Activated CD4-positive, alpha-beta T cell treated with anti-CD3 and anti-CD28 coated beads, Interleukin-2, amount 10 ng/mL, durations not matched to agents 24 days and 14 days (primary cell): ENCODE measurements at regions of chr4 and their contacts with region 1.

Region 1: DNA sequence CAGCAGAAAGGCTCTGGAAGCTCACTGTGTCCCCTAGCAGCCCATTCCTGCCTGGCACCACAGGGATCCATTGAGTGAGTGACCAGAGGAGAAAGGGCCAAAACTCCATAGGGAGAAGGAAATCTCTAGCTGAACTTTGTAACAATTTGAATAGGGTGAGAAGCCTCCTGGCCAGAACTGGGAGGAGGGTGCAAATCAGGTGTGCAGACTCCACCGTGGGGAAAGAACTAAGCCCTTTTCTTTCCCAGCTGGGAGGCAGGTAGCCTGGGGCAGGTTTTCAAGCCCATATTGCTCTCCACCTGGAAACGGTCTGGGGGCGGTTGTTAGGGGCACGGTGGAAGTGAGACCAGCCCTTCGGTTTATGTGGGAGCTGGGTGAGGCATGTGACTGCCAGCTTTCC is 227.2 kb downstream of the SNCA start:
- DNase-seq: no peak
- H3K4me3 Mint-ChIP-seq: no peak overlapping the region
- H3K27ac Mint-ChIP-seq: no peak overlapping the region
- H3K4me1 Mint-ChIP-seq: peaks cover 16% of the 10 kb centered on the region
- H3K27me3 Mint-ChIP-seq: no peaks in the 10 kb centered on the region

Region 2: GRCh38 chr4:88775529-88775928 is 834.2 kb before region 1 on chr4:
- intact Hi-C with region 1: no loop called
- DNase-seq: no peak
- H3K4me3 Mint-ChIP-seq: no peak overlapping the region
- H3K27ac Mint-ChIP-seq: no peak overlapping the region
- H3K4me1 Mint-ChIP-seq: no peaks in the 10 kb centered on the region
- H3K27me3 Mint-ChIP-seq: no peaks in the 10 kb centered on the region

Region 3: DNA sequence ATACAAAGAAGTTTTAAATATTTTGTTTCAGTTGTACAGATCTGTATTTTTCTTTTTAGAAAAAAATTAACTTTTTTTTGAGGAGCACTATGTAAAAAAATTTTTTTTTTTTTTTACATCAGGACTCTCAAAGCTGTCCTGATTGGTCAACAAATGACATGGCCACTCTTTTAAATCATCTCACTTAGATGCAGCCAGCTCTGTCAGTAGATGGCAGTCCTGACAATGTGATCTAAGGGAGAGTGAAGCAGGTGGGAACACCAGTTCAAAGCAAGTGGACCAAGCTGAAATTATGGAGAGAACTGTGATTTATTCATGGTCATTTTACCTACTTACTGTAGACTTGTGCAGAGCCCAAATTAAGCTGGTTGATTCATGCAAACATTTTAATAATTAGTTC is 127.5 kb before region 1 on chr4:
- intact Hi-C with region 1: loop called (anchors 10 kb)
- DNase-seq: no peak
- H3K4me3 Mint-ChIP-seq: no peak overlapping the region
- H3K27ac Mint-ChIP-seq: no peak overlapping the region
- H3K4me1 Mint-ChIP-seq: no peaks in the 10 kb centered on the region
- H3K27me3 Mint-ChIP-seq: peaks cover 3% of the 10 kb centered on the region

Region 4: GRCh38 chr4:89509708-89510281 is 100.0 kb before region 1 on chr4:
- intact Hi-C with region 1: no loop called
- DNase-seq: peak; percentile 80
- H3K4me3 Mint-ChIP-seq: no peak overlapping the region
- H3K27ac Mint-ChIP-seq: no peak overlapping the region
- H3K4me1 Mint-ChIP-seq: peaks cover 15% of the 10 kb centered on the region
- H3K27me3 Mint-ChIP-seq: peaks cover 38% of the 10 kb centered on the region